CD8-positive, alpha-beta T cell (primary cell): ENCODE measurements at regions of chr2 and their contacts with region 1.

Region 1: GRCh38 chr2:170815746-170816503 is 762 bp upstream of the GAD1 start:
- DNase-seq: peak in 8 of 9 experiments; percentile 39 to 78 (median 64)
- ATAC-seq: peak; percentile 48
- H3K4me3 ChIP-seq: peak overlapping the region; percentile 38 to 56
- H3K4me3 Mint-ChIP-seq: peak overlapping the region; percentile 59
- H3K27ac ChIP-seq: no peak overlapping the region
- H3K27ac Mint-ChIP-seq: no peak overlapping the region
- H3K4me1 ChIP-seq: peaks cover 57% of the 10 kb centered on the region
- H3K4me1 Mint-ChIP-seq: peaks cover 50% of the 10 kb centered on the region
- H3K27me3 ChIP-seq: peaks cover 54 to 58% of the 10 kb centered on the region in 2 experiments
- H3K27me3 Mint-ChIP-seq: peaks cover 72% of the 10 kb centered on the region
- CTCF ChIP-seq: peak; percentile 74

Region 2: GRCh38 chr2:170361090-170361936 is 454.6 kb before region 1 on chr2:
- CTCF ChIA-PET with region 1: interaction called, 49 read pairs
- POLR2A ChIA-PET with region 1: no interaction called
- intact Hi-C with region 1: loop called (anchors 1 kb)
- DNase-seq: peak; percentile 6 to 71 (median 42)
- ATAC-seq: peak; percentile 63
- H3K4me3 ChIP-seq: no peak overlapping the region
- H3K4me3 Mint-ChIP-seq: no peak overlapping the region
- H3K27ac ChIP-seq: no peak overlapping the region
- H3K27ac Mint-ChIP-seq: no peak overlapping the region
- H3K4me1 ChIP-seq: no peaks in the 10 kb centered on the region
- H3K4me1 Mint-ChIP-seq: peaks cover 7% of the 10 kb centered on the region
- H3K27me3 ChIP-seq: no peaks in the 10 kb centered on the region
- H3K27me3 Mint-ChIP-seq: peaks cover 14% of the 10 kb centered on the region
- CTCF ChIP-seq: peak; percentile 47

Region 3: DNA sequence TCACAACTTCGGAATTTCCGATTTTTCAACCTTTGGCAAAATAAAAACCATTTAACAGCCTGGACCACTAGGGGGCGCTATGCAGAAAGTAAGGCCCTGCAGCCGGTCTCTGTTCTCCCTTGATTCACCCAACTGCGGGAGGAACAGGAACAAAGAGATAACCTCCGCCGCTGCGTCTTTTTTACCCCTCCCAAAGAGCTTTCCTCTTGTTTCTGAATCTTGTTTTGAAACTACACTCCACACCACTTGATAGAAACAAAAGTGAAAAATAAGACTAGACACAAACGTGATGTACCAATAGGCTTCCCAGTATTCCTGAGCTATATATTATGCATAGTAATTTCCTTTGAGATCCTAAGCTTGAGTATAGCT is 406.8 kb before region 1 on chr2:
- CTCF ChIA-PET with region 1: interaction called, 149 read pairs
- POLR2A ChIA-PET with region 1: interaction called, 4 read pairs
- intact Hi-C with region 1: loop called (anchors 1 kb)
- DNase-seq: peak; percentile 36 to 85 (median 75)
- ATAC-seq: peak; percentile 59
- H3K4me3 ChIP-seq: no peak overlapping the region
- H3K4me3 Mint-ChIP-seq: peak overlapping the region; percentile 40
- H3K27ac ChIP-seq: no peak overlapping the region
- H3K27ac Mint-ChIP-seq: no peak overlapping the region
- H3K4me1 ChIP-seq: peaks cover 9% of the 10 kb centered on the region
- H3K4me1 Mint-ChIP-seq: peaks cover 13% of the 10 kb centered on the region
- H3K27me3 ChIP-seq: peaks cover 0 to 2% of the 10 kb centered on the region in 2 experiments
- H3K27me3 Mint-ChIP-seq: peaks cover 27% of the 10 kb centered on the region
- CTCF ChIP-seq: peak; percentile 91

Region 4: GRCh38 chr2:170715062-170715931 is 100.6 kb before region 1 on chr2 and contains the start of gene SP5:
- CTCF ChIA-PET with region 1: interaction called, 4 read pairs
- POLR2A ChIA-PET with region 1: interaction called, 4 read pairs
- intact Hi-C with region 1: loop called (anchors 5 to 10 kb)
- DNase-seq: peak in 5 of 9 experiments; percentile 19 to 62 (median 32)
- ATAC-seq: peak; percentile 46
- H3K4me3 ChIP-seq: peak within 1 kb of the TSS; percentile 44
- H3K4me3 Mint-ChIP-seq: peak within 1 kb of the TSS; percentile 90
- H3K27ac ChIP-seq: no peak within 1 kb of the TSS
- H3K27ac Mint-ChIP-seq: peak within 1 kb of the TSS; percentile 37
- H3K4me1 ChIP-seq: peaks cover 50% of the 10 kb centered on the region
- H3K4me1 Mint-ChIP-seq: peaks cover 43% of the 10 kb centered on the region
- H3K27me3 ChIP-seq: peaks cover 46 to 47% of the 10 kb centered on the region in 2 experiments
- H3K27me3 Mint-ChIP-seq: peaks cover 59% of the 10 kb centered on the region
- CTCF ChIP-seq: no peak
- total RNA-seq, gene SP5: not detected

Region 5: DNA sequence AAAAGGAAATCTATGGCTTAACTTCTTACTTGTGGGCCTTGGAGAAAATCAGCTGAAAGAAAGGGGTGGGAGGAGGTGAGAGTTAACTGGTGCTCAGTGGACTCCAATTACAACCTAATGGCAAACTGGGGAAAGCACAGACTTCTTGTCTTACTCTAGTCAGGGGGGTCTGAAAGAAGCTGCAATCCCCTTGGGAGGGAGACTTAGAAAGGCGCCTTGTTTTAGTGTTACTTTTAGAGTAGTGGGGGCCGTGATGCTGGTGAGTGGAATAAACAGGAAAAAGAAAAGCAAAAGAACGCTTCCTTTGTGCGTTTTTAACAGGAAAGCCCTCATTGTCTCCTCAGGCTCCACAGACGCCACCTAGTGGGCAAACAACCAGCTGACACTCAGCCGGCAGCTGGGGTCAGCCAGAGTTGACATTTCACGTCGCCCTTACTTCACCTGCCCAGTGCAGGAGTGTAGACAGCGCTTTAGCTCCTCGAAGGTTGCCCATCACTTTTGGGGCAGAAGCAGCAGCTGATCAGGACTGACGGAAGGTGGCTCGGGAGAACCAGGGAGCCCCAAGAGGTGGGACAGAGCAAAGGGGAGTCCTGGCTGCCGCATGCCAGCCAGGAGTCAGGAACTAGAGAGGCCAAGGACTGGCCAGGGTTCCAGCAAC is 57.2 kb after region 1 on chr2:
- CTCF ChIA-PET with region 1: interaction called, 8 read pairs
- POLR2A ChIA-PET with region 1: no interaction called
- intact Hi-C with region 1: loop called in 1 of 2 experiments (anchors 5 kb)
- DNase-seq: peak; percentile 46 to 83 (median 72)
- ATAC-seq: peak; percentile 92
- H3K4me3 ChIP-seq: peak overlapping the region; percentile 32 to 48
- H3K4me3 Mint-ChIP-seq: peak overlapping the region; percentile 75
- H3K27ac ChIP-seq: no peak overlapping the region
- H3K27ac Mint-ChIP-seq: peak overlapping the region; percentile 53
- H3K4me1 ChIP-seq: peaks cover 10% of the 10 kb centered on the region
- H3K4me1 Mint-ChIP-seq: peaks cover 15% of the 10 kb centered on the region
- H3K27me3 ChIP-seq: no peaks in the 10 kb centered on the region
- H3K27me3 Mint-ChIP-seq: peaks cover 5% of the 10 kb centered on the region
- CTCF ChIP-seq: peak; percentile 80